B cell (primary cell): ENCODE measurements at regions of chr9 and their contacts with region 1.

Region 1: GRCh38 chr9:112333639-112334431 is 416 bp upstream of the PTBP3 start:
- DNase-seq: peak; percentile 97
- ATAC-seq: peak; percentile 86
- H3K4me3 ChIP-seq: peak overlapping the region; percentile 71 to 93 (median 90)
- H3K4me3 Mint-ChIP-seq: peak overlapping the region; percentile 98
- H3K27ac ChIP-seq: peak overlapping the region; percentile 89 to 97
- H3K27ac Mint-ChIP-seq: peak overlapping the region; percentile 99
- H3K4me1 ChIP-seq: peaks cover 16 to 25% of the 10 kb centered on the region in 2 donors
- H3K4me1 Mint-ChIP-seq: peaks cover 35% of the 10 kb centered on the region
- H3K27me3 ChIP-seq: no peaks in the 10 kb centered on the region
- H3K27me3 Mint-ChIP-seq: no peaks in the 10 kb centered on the region
- CTCF ChIP-seq: peak; percentile 66

Region 2: DNA sequence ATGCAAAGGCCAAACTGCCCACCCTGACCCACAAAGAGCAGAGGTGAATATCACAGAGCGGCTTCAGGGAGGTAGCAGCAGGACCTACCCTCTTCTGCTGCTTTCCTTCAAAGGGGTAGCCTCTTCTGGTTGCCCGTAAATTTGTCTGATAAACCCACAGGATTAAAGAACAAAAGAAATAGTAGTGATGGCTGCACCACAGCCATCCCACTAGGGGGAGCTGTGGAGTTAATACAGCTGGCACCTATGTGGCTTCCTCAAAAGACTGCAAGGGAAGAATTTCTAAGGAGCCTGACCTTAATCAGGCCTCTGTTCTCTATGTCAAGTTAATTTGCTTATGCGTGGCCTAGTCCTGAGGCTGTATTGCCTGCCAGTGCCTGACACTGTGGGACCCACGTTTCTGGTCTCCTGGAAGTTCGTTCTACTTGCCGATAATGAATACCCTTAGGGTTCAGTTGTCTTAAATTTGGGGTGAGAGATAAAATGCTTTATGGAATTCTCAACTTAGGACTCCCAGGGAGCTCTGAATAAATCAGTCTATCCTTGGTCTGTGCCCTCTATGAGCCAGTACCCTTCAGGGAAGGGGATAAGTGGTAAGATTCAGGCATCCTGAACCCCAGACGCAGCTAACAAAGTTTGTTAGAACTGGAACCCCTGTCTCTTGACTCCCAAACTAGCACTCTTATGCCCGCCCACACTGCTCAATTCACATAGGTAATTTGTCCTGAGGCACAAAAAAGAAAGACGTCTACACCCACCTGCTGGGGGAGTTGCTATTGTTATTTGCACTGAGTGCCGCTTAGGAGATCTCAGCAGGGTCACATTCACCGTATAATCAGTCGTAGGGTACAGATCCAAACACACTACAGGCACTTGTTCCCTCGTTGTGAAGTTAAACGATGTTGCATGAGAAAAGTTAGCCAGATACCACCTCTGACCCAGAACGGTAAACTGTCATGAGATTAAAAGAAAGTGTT is 235.8 kb before region 1 on chr9:
- CTCF ChIA-PET with region 1: interaction called, 31 read pairs
- POLR2A ChIA-PET with region 1: interaction called, 5 read pairs
- intact Hi-C with region 1: loop called (anchors 1 kb)
- DNase-seq: peak; percentile 86
- ATAC-seq: peak; percentile 94
- H3K4me3 ChIP-seq: no peak overlapping the region
- H3K4me3 Mint-ChIP-seq: no peak overlapping the region
- H3K27ac ChIP-seq: no peak overlapping the region
- H3K27ac Mint-ChIP-seq: peak overlapping the region; percentile 16
- H3K4me1 ChIP-seq: peaks cover 10 to 13% of the 10 kb centered on the region in 2 donors
- H3K4me1 Mint-ChIP-seq: peaks cover 37% of the 10 kb centered on the region
- H3K27me3 ChIP-seq: no peaks in the 10 kb centered on the region
- H3K27me3 Mint-ChIP-seq: no peaks in the 10 kb centered on the region
- CTCF ChIP-seq: peak; percentile 94

Region 3: DNA sequence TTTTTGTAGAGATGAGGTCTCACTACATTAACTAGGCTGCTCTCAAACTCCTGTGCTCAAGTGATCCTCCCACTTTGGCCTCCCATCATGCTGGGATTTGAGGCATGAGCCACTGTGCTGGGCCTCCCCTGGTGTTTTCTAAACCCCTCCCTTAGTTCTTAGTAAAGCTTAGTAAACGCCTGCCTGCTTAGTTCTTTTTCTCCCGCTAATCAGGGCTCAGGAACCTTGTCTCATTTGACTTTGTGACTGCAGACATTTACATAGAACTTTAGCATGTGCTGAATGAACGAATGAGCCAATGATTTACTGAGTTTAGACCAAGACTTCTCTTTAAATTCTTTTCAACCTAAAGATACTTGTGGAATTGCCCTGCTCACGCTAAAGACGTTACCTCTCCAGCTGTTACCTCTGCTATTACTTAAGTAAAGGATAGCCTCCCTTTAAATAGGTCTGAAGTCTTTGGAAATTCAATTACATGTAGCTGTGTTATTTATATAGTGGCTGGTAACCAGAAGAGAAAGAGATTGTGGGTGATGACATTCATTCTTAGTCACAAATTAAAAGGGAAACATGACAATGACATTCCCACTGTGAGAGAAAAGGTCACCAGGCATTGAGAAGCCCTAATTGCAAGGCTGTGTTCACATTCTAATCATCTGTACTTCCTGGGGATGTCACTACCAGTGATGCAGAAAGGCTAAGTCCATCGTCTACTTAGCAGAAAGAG is 140.1 kb before region 1 on chr9:
- CTCF ChIA-PET with region 1: no interaction called
- POLR2A ChIA-PET with region 1: no interaction called
- intact Hi-C with region 1: no loop called
- DNase-seq: no peak
- ATAC-seq: no peak
- H3K4me3 ChIP-seq: no peak overlapping the region
- H3K4me3 Mint-ChIP-seq: no peak overlapping the region
- H3K27ac ChIP-seq: no peak overlapping the region
- H3K27ac Mint-ChIP-seq: no peak overlapping the region
- H3K4me1 ChIP-seq: no peaks in the 10 kb centered on the region
- H3K4me1 Mint-ChIP-seq: peaks cover 5% of the 10 kb centered on the region
- H3K27me3 ChIP-seq: no peaks in the 10 kb centered on the region
- H3K27me3 Mint-ChIP-seq: no peaks in the 10 kb centered on the region
- CTCF ChIP-seq: no peak

Region 4: DNA sequence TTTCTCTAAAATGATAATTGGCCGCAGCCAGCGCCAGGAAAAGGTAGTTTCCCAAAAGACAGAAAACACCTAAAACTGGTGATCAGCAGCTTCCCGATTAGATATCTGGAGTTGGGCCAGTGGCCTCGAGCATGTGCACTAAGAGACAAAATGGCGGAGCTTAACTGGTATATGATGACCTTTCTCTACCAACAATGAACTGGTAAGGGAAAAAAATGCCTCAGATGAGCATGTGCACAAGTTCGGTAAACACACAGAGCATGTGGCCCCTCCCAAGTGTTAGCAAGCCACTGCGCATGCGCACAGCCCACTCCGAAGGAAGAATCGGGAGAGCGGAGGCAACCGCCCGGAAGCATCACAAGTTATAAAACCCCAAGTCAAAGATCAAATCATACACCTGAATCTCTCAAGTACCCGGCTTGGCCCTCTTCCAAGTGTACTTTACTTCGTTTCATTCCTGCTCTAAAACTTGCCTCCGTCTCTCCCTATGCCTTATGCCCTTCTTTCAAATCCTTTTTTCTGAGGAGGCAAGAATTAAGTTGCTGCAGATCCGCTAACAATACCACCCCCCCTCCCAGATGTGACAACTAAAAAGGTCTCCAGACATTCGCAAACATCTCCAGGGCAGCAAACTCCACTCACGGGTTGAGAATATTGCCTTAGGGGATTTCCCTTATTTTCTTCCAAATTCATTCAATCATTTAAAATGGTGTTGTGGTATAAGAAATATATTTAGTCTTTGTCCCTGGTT is 14.6 kb after region 1 on chr9:
- CTCF ChIA-PET with region 1: interaction called, 3 read pairs
- POLR2A ChIA-PET with region 1: no interaction called
- intact Hi-C with region 1: loop called (anchors 2 kb)
- DNase-seq: peak; percentile 74
- ATAC-seq: peak; percentile 63
- H3K4me3 ChIP-seq: peak overlapping the region; percentile 40 to 62 (median 45)
- H3K4me3 Mint-ChIP-seq: peak overlapping the region; percentile 86
- H3K27ac ChIP-seq: no peak overlapping the region
- H3K27ac Mint-ChIP-seq: peak overlapping the region; percentile 75
- H3K4me1 ChIP-seq: peaks cover 5 to 9% of the 10 kb centered on the region in 2 donors
- H3K4me1 Mint-ChIP-seq: peaks cover 12% of the 10 kb centered on the region
- H3K27me3 ChIP-seq: peaks cover 0 to 3% (median 0%) of the 10 kb centered on the region in 4 experiments
- H3K27me3 Mint-ChIP-seq: no peaks in the 10 kb centered on the region
- CTCF ChIP-seq: no peak

Region 5: DNA sequence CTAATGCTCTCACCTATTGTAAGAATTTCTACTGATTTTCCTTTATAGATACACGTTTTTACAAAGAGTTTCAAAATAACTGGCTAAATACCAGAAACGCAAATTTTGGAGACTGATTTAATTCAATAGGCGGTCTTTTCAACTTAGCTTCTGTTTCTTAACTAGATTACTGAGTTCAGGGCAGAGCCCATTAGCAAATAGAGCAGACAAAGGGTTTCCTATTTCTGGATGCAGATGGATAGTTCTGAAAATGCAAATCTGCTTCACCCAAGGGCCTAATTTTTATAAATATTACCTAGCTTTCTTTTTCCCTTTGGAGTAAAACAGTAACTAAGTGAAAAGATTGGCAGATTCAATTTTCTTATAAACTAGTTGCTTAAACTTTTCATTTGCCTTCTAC is 139.2 kb after region 1 on chr9:
- CTCF ChIA-PET with region 1: no interaction called
- POLR2A ChIA-PET with region 1: interaction called, 10 read pairs
- intact Hi-C with region 1: no loop called
- DNase-seq: no peak
- ATAC-seq: no peak
- H3K4me3 ChIP-seq: no peak overlapping the region
- H3K4me3 Mint-ChIP-seq: no peak overlapping the region
- H3K27ac ChIP-seq: no peak overlapping the region
- H3K27ac Mint-ChIP-seq: no peak overlapping the region
- H3K4me1 ChIP-seq: no peaks in the 10 kb centered on the region
- H3K4me1 Mint-ChIP-seq: no peaks in the 10 kb centered on the region
- H3K27me3 ChIP-seq: no peaks in the 10 kb centered on the region
- H3K27me3 Mint-ChIP-seq: no peaks in the 10 kb centered on the region
- CTCF ChIP-seq: no peak

Region 6: DNA sequence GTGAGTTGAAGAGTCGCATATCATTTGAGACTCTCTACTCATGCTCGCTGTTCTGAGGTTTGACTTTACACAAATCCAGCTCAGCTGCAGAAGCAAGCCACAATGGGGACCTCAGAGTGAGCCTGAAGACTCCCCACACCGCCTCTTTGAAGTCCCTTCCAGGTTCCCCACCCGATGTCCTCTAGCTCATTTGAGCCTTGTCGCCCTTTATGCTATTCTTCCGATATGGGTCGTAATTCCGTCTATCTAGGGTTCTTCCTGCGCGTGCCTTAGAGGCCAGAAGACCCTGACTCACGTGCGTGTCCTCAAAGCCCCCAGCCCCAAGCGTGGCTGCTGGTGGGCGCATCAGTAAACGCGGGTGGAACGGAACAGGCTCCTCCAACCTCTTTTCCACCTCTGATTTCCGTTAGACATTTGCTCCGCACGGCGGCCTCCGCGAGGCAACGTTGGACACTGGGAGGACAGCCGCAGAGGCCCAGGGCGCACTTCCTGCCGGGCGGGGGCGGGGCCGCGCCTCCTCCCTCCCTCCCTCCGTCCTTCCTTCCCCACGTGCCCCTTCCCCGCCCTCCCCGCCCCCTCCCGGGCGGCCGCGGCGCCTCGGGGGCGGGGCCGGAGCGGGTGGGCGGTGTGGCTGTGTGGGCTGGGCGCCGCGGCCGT is 416.4 kb after region 1 on chr9 and contains the start of gene SNX30:
- CTCF ChIA-PET with region 1: no interaction called
- POLR2A ChIA-PET with region 1: interaction called, 3 read pairs
- intact Hi-C with region 1: loop called (anchors 1 kb)
- DNase-seq: peak; percentile 88
- ATAC-seq: peak; percentile 94
- H3K4me3 ChIP-seq: peak within 1 kb of the TSS; percentile 67 to 90 (median 83)
- H3K4me3 Mint-ChIP-seq: peak within 1 kb of the TSS; percentile 91
- H3K27ac ChIP-seq: peak within 1 kb of the TSS; percentile 55 to 69
- H3K27ac Mint-ChIP-seq: peak within 1 kb of the TSS; percentile 92
- H3K4me1 ChIP-seq: peaks cover 24 to 44% of the 10 kb centered on the region in 2 donors
- H3K4me1 Mint-ChIP-seq: peaks cover 45% of the 10 kb centered on the region
- H3K27me3 ChIP-seq: no peaks in the 10 kb centered on the region
- H3K27me3 Mint-ChIP-seq: no peaks in the 10 kb centered on the region
- CTCF ChIP-seq: no peak
- total RNA-seq, gene SNX30: 18.8 and 20.6 TPM in 2 replicates

Region 7: GRCh38 chr9:112831281-112831851 is 497.5 kb after region 1 on chr9:
- CTCF ChIA-PET with region 1: no interaction called
- POLR2A ChIA-PET with region 1: no interaction called
- intact Hi-C with region 1: no loop called
- DNase-seq: no peak
- ATAC-seq: no peak
- H3K4me3 ChIP-seq: no peak overlapping the region
- H3K4me3 Mint-ChIP-seq: no peak overlapping the region
- H3K27ac ChIP-seq: no peak overlapping the region
- H3K27ac Mint-ChIP-seq: no peak overlapping the region
- H3K4me1 ChIP-seq: peaks cover 7 to 10% of the 10 kb centered on the region in 2 donors
- H3K4me1 Mint-ChIP-seq: peaks cover 6% of the 10 kb centered on the region
- H3K27me3 ChIP-seq: no peaks in the 10 kb centered on the region
- H3K27me3 Mint-ChIP-seq: no peaks in the 10 kb centered on the region
- CTCF ChIP-seq: no peak